ENCODE measurements at regions of chr1 and their contacts with region 1.

Region 1: DNA sequence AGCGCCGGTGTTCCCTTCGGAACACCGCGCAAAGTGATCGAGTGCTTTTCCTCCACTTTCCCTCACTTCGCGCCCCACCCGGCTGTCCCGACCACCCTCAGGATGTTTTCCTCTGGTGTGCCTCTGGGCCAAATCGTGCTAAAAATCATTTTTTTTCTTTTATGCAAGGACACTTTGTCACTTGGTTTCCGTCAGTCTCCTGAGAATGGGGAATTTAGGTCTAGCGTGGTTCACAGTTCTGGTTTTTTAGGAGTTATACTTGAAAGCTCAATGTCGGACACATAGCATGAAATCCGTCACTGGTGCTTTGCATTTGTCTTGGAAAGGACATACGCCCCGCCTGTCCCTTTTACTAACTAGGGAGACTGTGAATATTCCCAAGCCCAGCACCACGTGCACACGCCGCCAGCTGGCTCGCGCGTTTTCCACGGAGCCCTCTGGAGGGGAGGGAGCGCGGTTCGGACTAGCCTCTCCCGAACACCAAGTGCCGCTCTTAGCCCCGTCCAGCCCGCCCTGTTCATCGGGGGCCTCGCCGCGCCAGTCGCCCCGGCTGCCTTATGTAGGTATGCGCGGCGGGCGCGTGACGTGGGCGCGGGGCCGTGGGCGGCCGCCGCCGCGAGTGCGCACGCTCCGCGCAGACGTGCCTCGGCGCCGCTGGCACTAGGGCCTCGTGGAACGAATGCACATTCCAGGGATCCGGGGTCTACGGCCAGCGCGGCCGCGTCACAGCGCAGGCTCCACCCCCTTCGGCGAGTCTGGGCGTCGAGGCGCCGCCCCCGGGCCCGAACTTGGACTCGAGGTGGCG is 572 bp upstream of the IRF2BP2 start:
- DNase-seq: peak; percentile 95
- H3K4me3 ChIP-seq: peak overlapping the region; percentile 44
- H3K27ac ChIP-seq: peak overlapping the region; percentile 100
- H3K4me1 ChIP-seq: peaks cover 13% of the 10 kb centered on the region
- H3K27me3 ChIP-seq: no peaks in the 10 kb centered on the region
- CTCF ChIP-seq: no peak

Region 2: GRCh38 chr1:234342774-234343173 is 267.8 kb before region 1 on chr1:
- intact Hi-C with region 1: no loop called
- DNase-seq: no peak
- H3K4me3 ChIP-seq: no peak overlapping the region
- H3K27ac ChIP-seq: no peak overlapping the region
- H3K4me1 ChIP-seq: no peaks in the 10 kb centered on the region
- H3K27me3 ChIP-seq: no peaks in the 10 kb centered on the region
- CTCF ChIP-seq: no peak

Region 3: GRCh38 chr1:234716908-234717375 is 106.4 kb after region 1 on chr1:
- intact Hi-C with region 1: loop called (anchors 2 kb)
- DNase-seq: no peak
- H3K4me3 ChIP-seq: no peak overlapping the region
- H3K27ac ChIP-seq: peak overlapping the region; percentile 88
- H3K4me1 ChIP-seq: peaks cover 23% of the 10 kb centered on the region
- H3K27me3 ChIP-seq: no peaks in the 10 kb centered on the region
- CTCF ChIP-seq: no peak